ENCODE measurements at regions of chr16 and their contacts with region 1.

Region 1: GRCh38 chr16:30429678-30430427 is at the start of gene DCTPP1:
- DNase-seq: peak; percentile 86 to 99 (median 95)
- ATAC-seq: peak; percentile 96 to 98 (median 98)
- H3K4me3 ChIP-seq: peak within 1 kb of the TSS; percentile 72 to 80
- H3K4me3 Mint-ChIP-seq: no peak within 1 kb of the TSS
- H3K27ac ChIP-seq: peak within 1 kb of the TSS; percentile 71
- H3K27ac Mint-ChIP-seq: no peak within 1 kb of the TSS
- H3K4me1 ChIP-seq: peaks cover 9 to 36% of the 10 kb centered on the region in 2 experiments
- H3K4me1 Mint-ChIP-seq: peaks cover 22 to 25% (median 23%) of the 10 kb centered on the region in 3 donors
- H3K27me3 ChIP-seq: no peaks in the 10 kb centered on the region
- H3K27me3 Mint-ChIP-seq: no peaks in the 10 kb centered on the region
- total RNA-seq, gene DCTPP1: 11.2 to 30.6 (median 24.7) TPM

Region 2: DNA sequence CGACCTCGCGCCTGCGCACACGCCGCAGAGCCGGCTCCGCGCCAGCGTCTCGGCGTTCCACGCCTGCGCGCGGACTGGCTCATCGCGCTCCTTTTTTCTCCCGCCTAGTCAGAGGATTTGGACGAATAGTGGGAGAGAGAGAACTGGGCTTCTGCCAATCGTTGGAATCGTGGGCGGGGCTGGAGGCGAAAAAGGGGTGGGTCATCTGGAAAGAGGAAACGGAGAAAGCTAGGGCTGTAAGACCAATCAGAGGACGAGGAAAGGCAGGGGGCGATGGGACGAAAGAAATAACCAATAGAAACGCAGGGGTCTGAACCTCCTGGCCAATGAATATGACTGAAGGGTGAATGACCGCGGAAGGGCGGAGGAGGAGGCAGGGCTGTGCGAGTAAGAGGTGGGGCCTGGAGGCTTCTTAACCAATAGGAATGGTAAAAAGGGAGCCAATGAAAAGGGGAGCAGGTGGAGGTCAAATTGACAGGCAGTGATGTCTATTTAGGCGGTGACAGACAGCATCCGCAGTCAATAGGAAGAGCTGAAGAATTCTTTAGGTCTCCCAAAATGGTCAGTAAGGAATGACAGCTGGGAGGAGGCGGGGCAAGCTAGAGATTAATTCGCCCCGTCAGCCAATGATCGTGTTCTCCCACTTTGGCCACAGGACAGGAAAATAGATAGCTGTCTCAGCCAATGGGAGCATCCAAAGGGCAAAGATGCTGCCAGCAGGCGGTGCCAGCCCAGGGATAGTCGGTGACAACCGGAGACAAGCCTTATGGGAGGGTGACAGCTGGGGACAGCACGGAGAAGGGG is 59.2 kb before region 1 on chr16 and contains the start of gene TBC1D10B:
- CTCF ChIA-PET with region 1: interaction called in 1 of 2 experiments, 13 read pairs
- POLR2A ChIA-PET with region 1: interaction called in 1 of 2 experiments, 4 read pairs
- DNase-seq: peak; percentile 96 to 100 (median 99)
- ATAC-seq: peak; percentile 83 to 86 (median 84)
- H3K4me3 ChIP-seq: peak within 1 kb of the TSS; percentile 62 to 66
- H3K4me3 Mint-ChIP-seq: peak within 1 kb of the TSS; percentile 85 to 91 (median 86)
- H3K27ac ChIP-seq: peak within 1 kb of the TSS; percentile 73
- H3K27ac Mint-ChIP-seq: peak within 1 kb of the TSS; percentile 93 to 95
- H3K4me1 ChIP-seq: peaks cover 22 to 44% of the 10 kb centered on the region in 2 experiments
- H3K4me1 Mint-ChIP-seq: peaks cover 45 to 49% (median 46%) of the 10 kb centered on the region in 3 donors
- H3K27me3 ChIP-seq: no peaks in the 10 kb centered on the region
- H3K27me3 Mint-ChIP-seq: no peaks in the 10 kb centered on the region
- total RNA-seq, gene TBC1D10B: 24.0 to 60.1 (median 52.5) TPM

Region 3: DNA sequence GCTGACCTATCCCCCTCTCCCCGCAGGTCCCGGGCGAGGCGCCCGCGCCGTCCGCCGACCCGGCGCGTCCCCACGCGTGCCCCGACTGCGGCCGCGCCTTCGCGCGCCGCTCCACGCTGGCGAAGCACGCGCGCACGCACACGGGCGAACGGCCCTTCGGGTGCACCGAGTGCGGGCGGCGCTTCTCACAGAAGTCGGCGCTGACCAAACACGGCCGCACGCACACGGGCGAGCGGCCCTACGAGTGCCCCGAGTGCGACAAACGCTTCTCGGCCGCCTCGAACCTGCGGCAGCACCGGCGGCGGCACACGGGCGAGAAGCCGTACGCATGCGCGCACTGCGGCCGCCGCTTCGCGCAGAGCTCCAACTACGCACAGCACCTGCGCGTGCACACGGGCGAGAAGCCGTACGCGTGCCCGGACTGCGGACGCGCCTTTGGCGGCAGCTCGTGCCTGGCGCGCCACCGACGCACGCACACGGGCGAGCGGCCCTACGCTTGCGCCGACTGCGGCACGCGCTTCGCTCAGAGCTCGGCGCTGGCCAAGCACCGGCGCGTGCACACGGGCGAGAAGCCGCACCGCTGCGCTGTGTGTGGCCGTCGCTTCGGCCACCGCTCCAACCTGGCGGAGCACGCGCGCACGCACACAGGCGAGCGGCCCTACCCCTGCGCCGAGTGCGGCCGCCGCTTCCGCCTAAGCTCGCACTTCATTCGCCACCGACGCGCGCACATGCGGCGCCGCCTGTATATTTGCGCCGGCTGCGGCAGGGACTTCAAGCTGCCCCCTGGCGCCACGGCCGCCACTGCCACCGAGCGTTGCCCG is 12.1 kb before region 1 on chr16:
- CTCF ChIA-PET with region 1: interaction called in 1 of 2 experiments, 35 read pairs
- POLR2A ChIA-PET with region 1: no interaction called
- DNase-seq: peak; percentile 78 to 97 (median 88)
- ATAC-seq: peak; percentile 86 to 89 (median 88)
- H3K4me3 ChIP-seq: peak overlapping the region; percentile 51 to 72
- H3K4me3 Mint-ChIP-seq: peak overlapping the region; percentile 44 to 68 (median 64)
- H3K27ac ChIP-seq: peak overlapping the region; percentile 78
- H3K27ac Mint-ChIP-seq: peak overlapping the region; percentile 23 to 68
- H3K4me1 ChIP-seq: peaks cover 9 to 18% of the 10 kb centered on the region in 2 experiments
- H3K4me1 Mint-ChIP-seq: peaks cover 7 to 14% (median 13%) of the 10 kb centered on the region in 3 donors
- H3K27me3 ChIP-seq: no peaks in the 10 kb centered on the region
- H3K27me3 Mint-ChIP-seq: no peaks in the 10 kb centered on the region

Region 4: DNA sequence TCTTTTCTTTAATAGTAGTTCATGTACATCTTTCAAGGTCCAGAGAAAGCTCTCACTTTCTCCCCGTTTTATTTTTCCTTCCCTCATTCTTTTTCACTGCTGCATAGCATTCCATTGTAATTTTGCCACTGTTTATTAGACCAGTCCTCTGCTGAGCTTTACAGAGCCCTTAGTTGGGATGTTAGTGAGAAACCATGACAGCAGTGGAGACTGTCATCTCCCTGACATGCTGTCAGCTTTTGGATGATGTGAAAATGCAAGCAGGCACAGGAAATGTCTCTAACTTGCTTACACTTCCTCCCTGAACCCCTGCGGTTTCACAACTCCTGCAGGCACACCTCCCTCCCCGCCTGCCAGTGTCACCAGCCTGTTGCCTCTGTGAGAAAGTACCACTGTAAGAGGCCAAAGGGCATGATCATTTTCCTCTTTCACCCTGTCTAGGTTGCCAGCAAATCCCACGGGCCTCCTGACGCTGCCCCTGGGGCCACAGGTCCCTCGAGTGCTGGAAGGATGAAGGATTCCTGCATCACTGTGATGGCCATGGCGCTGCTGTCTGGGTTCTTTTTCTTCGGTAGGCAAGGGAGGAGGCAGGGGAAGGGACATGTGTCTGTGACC is 42.6 kb after region 1 on chr16 and contains the start of gene ITGAL:
- CTCF ChIA-PET with region 1: interaction called in 1 of 2 experiments, 21 read pairs
- POLR2A ChIA-PET with region 1: interaction called, 3 to 4 read pairs
- DNase-seq: peak; percentile 66 to 91 (median 82)
- ATAC-seq: peak; percentile 84 to 88 (median 86)
- H3K4me3 ChIP-seq: peak within 1 kb of the TSS; percentile 82 to 92
- H3K4me3 Mint-ChIP-seq: peak within 1 kb of the TSS; percentile 95 to 99 (median 99)
- H3K27ac ChIP-seq: peak within 1 kb of the TSS; percentile 77
- H3K27ac Mint-ChIP-seq: peak within 1 kb of the TSS; percentile 95
- H3K4me1 ChIP-seq: peaks cover 37 to 81% of the 10 kb centered on the region in 2 experiments
- H3K4me1 Mint-ChIP-seq: peaks cover 58 to 74% (median 59%) of the 10 kb centered on the region in 3 donors
- H3K27me3 ChIP-seq: no peaks in the 10 kb centered on the region
- H3K27me3 Mint-ChIP-seq: no peaks in the 10 kb centered on the region
- total RNA-seq, gene ITGAL: 322 to 640 (median 518) TPM

Region 5: GRCh38 chr16:30534368-30535105 is 104.7 kb after region 1 on chr16 and contains the start of gene ZNF747:
- CTCF ChIA-PET with region 1: interaction called, 3 to 16 read pairs
- POLR2A ChIA-PET with region 1: no interaction called
- DNase-seq: peak; percentile 83 to 95 (median 90)
- ATAC-seq: peak; percentile 81 to 84 (median 82)
- H3K4me3 ChIP-seq: peak within 1 kb of the TSS; percentile 83 to 97
- H3K4me3 Mint-ChIP-seq: peak within 1 kb of the TSS; percentile 92 to 100 (median 97)
- H3K27ac ChIP-seq: peak within 1 kb of the TSS; percentile 97
- H3K27ac Mint-ChIP-seq: peak within 1 kb of the TSS; percentile 95 to 99
- H3K4me1 ChIP-seq: peaks cover 7 to 48% of the 10 kb centered on the region in 2 experiments
- H3K4me1 Mint-ChIP-seq: peaks cover 30 to 42% (median 35%) of the 10 kb centered on the region in 3 donors
- H3K27me3 ChIP-seq: no peaks in the 10 kb centered on the region
- H3K27me3 Mint-ChIP-seq: no peaks in the 10 kb centered on the region
- total RNA-seq, gene ZNF747: 6.8 to 17.4 (median 14.2) TPM

Region 6: DNA sequence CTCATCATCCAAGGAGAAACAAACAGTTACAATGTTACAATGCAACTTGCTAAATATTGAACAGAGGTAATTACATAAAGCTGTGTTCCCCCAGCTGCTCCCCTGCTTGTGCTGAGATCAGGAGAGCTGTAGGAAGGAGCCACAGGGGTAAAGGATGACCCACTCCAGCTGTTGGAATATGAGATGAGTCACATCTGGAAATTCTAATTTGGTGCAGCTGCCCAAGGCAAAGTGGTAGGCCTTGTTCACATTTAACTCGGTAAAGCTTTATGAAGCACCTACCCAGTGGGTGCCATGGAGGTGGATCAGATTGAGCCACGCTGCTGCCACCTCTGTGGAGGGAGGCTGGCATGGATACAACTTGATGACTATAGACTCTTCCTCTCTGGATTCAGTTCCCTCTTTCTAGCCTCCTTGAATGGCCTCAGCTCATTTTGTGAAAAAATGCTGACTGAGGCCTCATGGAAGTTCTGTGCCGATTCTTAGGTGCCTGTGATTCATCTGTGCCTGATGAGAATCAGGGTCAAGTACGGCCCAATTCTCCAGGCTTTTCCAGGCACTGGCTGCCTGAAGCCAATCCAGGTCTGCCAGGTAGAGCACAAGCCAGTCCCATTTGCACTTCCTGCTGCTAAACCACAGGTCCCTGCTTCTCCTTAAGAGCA is 172.9 kb after region 1 on chr16:
- CTCF ChIA-PET with region 1: interaction called in 1 of 2 experiments, 15 read pairs
- POLR2A ChIA-PET with region 1: no interaction called
- DNase-seq: no peak
- ATAC-seq: no peak
- H3K4me3 ChIP-seq: no peak overlapping the region
- H3K4me3 Mint-ChIP-seq: no peak overlapping the region
- H3K27ac ChIP-seq: no peak overlapping the region
- H3K27ac Mint-ChIP-seq: no peak overlapping the region
- H3K4me1 ChIP-seq: peaks cover 0 to 3% of the 10 kb centered on the region in 2 experiments
- H3K4me1 Mint-ChIP-seq: peaks cover 3 to 12% (median 12%) of the 10 kb centered on the region in 3 donors
- H3K27me3 ChIP-seq: no peaks in the 10 kb centered on the region
- H3K27me3 Mint-ChIP-seq: no peaks in the 10 kb centered on the region

Measured in T-cell (primary cell).